T-cell (primary cell): ENCODE measurements at regions of chr17 and their contacts with region 1.

Region 1: GRCh38 chr17:6691546-6691945 is 21.6 kb downstream of the SLC13A5 start:
- DNase-seq: no peak
- ATAC-seq: no peak
- H3K4me3 ChIP-seq: no peak overlapping the region
- H3K4me3 Mint-ChIP-seq: no peak overlapping the region
- H3K27ac ChIP-seq: no peak overlapping the region
- H3K27ac Mint-ChIP-seq: no peak overlapping the region
- H3K4me1 ChIP-seq: no peaks in the 10 kb centered on the region
- H3K4me1 Mint-ChIP-seq: no peaks in the 10 kb centered on the region
- H3K27me3 ChIP-seq: peaks cover 0 to 28% of the 10 kb centered on the region in 2 experiments
- H3K27me3 Mint-ChIP-seq: peaks cover 33 to 64% of the 10 kb centered on the region in 2 donors

Region 2: DNA sequence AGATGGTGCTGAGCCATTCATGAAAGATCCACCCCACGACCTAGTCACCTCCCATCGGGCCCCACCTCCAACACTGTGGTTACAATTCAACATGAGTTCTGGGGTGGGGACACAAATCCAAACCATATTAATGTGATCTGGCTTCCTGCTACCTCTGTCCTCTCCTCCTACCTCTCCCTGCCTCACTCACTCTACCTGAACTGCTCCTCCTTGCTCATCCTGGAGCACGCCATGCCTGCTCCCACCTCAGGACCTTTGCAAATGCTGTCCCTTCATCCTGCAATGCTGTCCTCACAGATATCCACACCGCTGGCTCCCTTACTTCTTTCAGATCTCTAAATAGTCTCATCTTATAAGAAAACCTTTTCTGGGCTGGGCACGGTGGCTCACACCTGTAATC is 32.5 kb after region 1 on chr17:
- CTCF ChIA-PET with region 1: no interaction called
- POLR2A ChIA-PET with region 1: interaction called in 1 of 2 experiments, 12 read pairs
- DNase-seq: no peak
- ATAC-seq: no peak
- H3K4me3 ChIP-seq: no peak overlapping the region
- H3K4me3 Mint-ChIP-seq: no peak overlapping the region
- H3K27ac ChIP-seq: no peak overlapping the region
- H3K27ac Mint-ChIP-seq: no peak overlapping the region
- H3K4me1 ChIP-seq: no peaks in the 10 kb centered on the region
- H3K4me1 Mint-ChIP-seq: no peaks in the 10 kb centered on the region
- H3K27me3 ChIP-seq: peaks cover 0 to 17% of the 10 kb centered on the region in 2 experiments
- H3K27me3 Mint-ChIP-seq: peaks cover 39 to 52% of the 10 kb centered on the region in 2 donors

Region 3: GRCh38 chr17:7014261-7014994 is 322.9 kb after region 1 on chr17:
- CTCF ChIA-PET with region 1: no interaction called
- POLR2A ChIA-PET with region 1: no interaction called
- DNase-seq: peak; percentile 94 to 99 (median 97)
- ATAC-seq: peak; percentile 82 to 89 (median 88)
- H3K4me3 ChIP-seq: peak overlapping the region; percentile 93 to 100
- H3K4me3 Mint-ChIP-seq: peak overlapping the region; percentile 89 to 97 (median 93)
- H3K27ac ChIP-seq: peak overlapping the region; percentile 98
- H3K27ac Mint-ChIP-seq: peak overlapping the region; percentile 99 to 100
- H3K4me1 ChIP-seq: peaks cover 29 to 76% of the 10 kb centered on the region in 2 experiments
- H3K4me1 Mint-ChIP-seq: peaks cover 68 to 81% (median 80%) of the 10 kb centered on the region in 3 donors
- H3K27me3 ChIP-seq: no peaks in the 10 kb centered on the region
- H3K27me3 Mint-ChIP-seq: no peaks in the 10 kb centered on the region